ENCODE measurements at regions of chr4 and their contacts with region 1.

Region 1: DNA sequence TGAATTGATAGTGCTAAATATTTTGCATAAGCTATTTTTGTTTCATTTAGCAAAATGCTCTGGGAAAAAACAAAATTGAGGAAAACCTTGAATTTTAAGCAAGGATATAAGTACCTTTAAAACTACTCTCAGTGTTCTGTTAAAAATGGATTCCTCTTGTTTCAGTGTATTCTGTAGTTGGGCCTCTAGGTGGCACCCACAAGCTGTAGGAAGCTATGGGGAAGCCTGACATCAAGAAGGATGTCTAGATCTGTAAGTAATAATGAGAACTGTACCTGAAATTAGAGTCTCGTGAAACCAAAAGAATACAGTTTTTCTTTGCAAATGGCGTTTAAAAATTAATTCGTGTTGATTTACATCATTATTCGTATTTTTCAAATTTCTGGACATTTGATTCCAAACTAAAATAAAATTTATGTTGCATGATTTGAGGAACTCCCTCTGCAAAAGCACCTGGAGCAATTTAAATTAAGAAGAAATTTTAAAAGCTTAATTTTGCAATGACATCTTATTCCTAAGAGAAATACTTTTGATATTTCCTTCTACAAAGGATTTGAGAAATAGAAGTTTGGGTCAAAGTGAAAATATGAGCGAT is 51.2 kb downstream of the TMPRSS11E start:
- DNase-seq: peak; percentile 81
- H3K4me3 Mint-ChIP-seq: no peak overlapping the region
- H3K27ac Mint-ChIP-seq: no peak overlapping the region
- H3K4me1 Mint-ChIP-seq: peaks cover 7% of the 10 kb centered on the region
- H3K27me3 Mint-ChIP-seq: no peaks in the 10 kb centered on the region

Region 2: DNA sequence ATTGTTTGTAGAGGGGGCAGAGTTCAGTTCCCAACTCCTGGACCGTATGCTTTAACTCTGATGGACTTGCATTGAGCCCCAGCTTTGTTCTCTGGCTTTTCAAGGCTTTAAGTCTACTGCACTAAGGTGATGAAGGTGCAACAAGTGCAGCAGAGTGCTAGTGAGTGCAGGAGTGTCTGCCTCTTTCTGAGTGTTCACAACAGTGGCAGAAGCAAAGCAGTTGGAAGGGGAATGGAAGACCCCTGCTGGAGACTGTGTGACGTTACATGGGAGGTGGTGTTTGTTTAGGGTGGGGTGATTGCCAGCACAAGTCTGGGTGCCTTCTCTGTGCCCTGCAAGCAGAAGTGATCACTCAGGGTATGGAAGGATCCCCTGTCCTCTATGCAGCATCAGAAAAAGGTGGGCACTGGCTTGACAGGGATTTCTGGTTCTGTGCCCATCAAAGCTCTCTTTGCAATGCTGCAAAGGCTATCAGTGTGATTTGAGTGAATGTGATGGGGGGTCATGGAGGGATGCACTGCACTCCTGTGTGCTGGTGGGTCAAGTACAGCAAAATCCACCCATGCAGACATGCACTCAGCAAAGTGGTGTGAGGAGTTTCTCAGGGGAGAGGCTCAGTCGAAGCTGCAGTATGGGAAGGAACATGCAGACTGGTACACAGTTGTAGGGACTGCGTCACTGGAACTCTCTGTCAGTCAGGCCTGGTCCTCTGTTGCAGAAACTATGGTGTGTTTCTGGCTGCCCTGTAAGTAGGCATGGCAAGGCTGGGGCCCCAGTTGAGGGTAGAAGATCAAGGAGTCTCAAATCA is 526.9 kb after region 1 on chr4:
- CTCF ChIA-PET with region 1: no interaction called
- intact Hi-C with region 1: loop called (anchors 1 kb)
- DNase-seq: no peak
- H3K4me3 Mint-ChIP-seq: no peak overlapping the region
- H3K27ac Mint-ChIP-seq: no peak overlapping the region
- H3K4me1 Mint-ChIP-seq: no peaks in the 10 kb centered on the region
- H3K27me3 Mint-ChIP-seq: no peaks in the 10 kb centered on the region

Region 3: GRCh38 chr4:69322055-69322454 is 823.5 kb after region 1 on chr4:
- CTCF ChIA-PET with region 1: no interaction called
- intact Hi-C with region 1: loop called (anchors 5 kb)
- DNase-seq: no peak
- H3K4me3 Mint-ChIP-seq: no peak overlapping the region
- H3K27ac Mint-ChIP-seq: no peak overlapping the region
- H3K4me1 Mint-ChIP-seq: no peaks in the 10 kb centered on the region
- H3K27me3 Mint-ChIP-seq: no peaks in the 10 kb centered on the region

Region 4: GRCh38 chr4:69689599-69689998 is 1191.1 kb after region 1 on chr4:
- CTCF ChIA-PET with region 1: no interaction called
- intact Hi-C with region 1: loop called (anchors 2 kb)
- DNase-seq: no peak
- H3K4me3 Mint-ChIP-seq: no peak overlapping the region
- H3K27ac Mint-ChIP-seq: no peak overlapping the region
- H3K4me1 Mint-ChIP-seq: peaks cover 3% of the 10 kb centered on the region
- H3K27me3 Mint-ChIP-seq: no peaks in the 10 kb centered on the region

Region 5: GRCh38 chr4:69881173-69881773 is 1382.8 kb after region 1 on chr4:
- CTCF ChIA-PET with region 1: interaction called, 3 read pairs
- intact Hi-C with region 1: loop called (anchors 1 kb)
- DNase-seq: peak; percentile 39
- H3K4me3 Mint-ChIP-seq: no peak overlapping the region
- H3K27ac Mint-ChIP-seq: no peak overlapping the region
- H3K4me1 Mint-ChIP-seq: peaks cover 3% of the 10 kb centered on the region
- H3K27me3 Mint-ChIP-seq: peaks cover 1% of the 10 kb centered on the region

Measured in activated naive CD4-positive, alpha-beta T cell treated with anti-CD3 and anti-CD28 coated beads for 36 hours (primary cell).